ENCODE measurements at regions of chr6 and their contacts with region 1.

Region 1: DNA sequence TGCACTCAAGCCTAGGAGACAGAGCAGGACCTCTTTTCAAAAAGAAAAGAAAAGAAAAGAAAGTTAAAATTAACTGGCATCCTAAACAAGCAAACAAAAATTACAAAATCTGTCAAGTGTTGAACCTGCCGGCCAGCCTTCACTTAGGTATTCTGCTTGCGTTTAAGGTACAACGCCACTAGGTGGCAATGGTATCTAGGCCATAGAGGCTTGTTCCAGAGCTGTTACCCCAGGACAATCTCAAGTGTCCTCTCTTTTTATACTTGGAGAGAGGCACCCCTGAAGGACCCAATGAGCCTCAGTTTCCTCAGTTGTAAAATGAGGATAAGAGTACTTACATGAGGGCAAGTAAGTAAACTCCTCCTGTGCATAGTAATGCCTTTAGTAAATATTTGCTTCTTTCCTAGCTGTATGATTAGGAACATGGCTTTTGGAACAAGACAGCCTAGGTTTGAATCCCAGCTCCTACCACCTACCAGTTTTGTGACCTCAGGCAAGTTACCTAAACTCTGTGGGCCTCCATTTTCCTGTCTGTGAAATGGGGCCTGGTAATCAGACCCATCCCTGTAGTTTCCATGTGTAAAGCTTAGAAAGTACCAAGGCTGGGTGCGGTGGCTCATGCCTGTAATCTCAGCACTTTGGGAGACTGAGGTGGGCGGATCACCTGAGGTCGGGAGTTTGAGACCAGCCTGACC is 5.8 kb upstream of the PACSIN1 start:
- DNase-seq: peak in 1 of 2 experiments; percentile 55
- H3K4me3 ChIP-seq: no peak overlapping the region
- H3K4me3 Mint-ChIP-seq: no peak overlapping the region
- H3K27ac Mint-ChIP-seq: no peak overlapping the region
- H3K4me1 ChIP-seq: peaks cover 5% of the 10 kb centered on the region
- H3K4me1 Mint-ChIP-seq: peaks cover 12% of the 10 kb centered on the region
- H3K27me3 ChIP-seq: no peaks in the 10 kb centered on the region
- H3K27me3 Mint-ChIP-seq: no peaks in the 10 kb centered on the region
- CTCF ChIP-seq: peak; percentile 64 to 72

Region 2: DNA sequence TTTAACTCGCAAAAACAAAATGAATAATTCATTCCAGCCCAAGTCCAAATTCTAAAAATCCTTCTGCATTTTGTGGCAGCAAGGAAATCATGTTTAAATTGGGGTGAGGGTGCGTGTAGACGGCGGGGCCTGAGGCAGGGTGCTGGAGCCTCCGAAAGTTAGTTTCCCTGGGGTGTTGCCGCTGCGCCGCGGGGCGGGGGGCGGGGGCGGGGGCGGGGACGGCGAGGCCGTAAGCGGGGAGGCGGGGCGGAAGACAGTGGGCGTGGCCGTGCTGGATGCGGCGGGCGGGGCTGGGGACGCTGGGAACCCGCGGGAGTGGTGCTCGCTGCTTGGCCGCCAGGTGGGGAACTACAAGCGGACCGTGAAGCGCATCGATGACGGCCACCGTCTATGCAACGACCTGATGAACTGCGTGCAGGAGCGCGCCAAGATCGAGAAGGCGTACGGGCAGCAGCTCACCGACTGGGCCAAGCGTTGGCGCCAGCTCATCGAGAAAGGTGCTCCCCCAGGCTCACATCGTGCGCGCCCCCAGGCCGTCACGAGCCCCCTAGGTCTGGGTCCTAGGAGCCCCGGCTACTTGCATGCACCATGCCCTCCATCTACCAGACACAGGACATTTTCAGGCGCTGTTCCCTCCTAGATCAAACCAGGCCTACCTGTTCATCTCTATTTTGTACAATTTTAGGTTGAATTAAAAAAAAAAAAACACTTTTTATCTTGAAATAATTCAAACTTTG is 67.1 kb after region 1 on chr6:
- CTCF ChIA-PET with region 1: interaction called, 3 read pairs
- POLR2A ChIA-PET with region 1: no interaction called
- intact Hi-C with region 1: loop called (anchors 10 kb)
- DNase-seq: peak; percentile 93 to 95
- H3K4me3 ChIP-seq: peak overlapping the region; percentile 37
- H3K4me3 Mint-ChIP-seq: peak overlapping the region; percentile 57
- H3K27ac Mint-ChIP-seq: no peak overlapping the region
- H3K4me1 ChIP-seq: peaks cover 12% of the 10 kb centered on the region; the same call in 1 of the 2 replicates
- H3K4me1 Mint-ChIP-seq: no peaks in the 10 kb centered on the region
- H3K27me3 ChIP-seq: no peaks in the 10 kb centered on the region
- H3K27me3 Mint-ChIP-seq: no peaks in the 10 kb centered on the region
- CTCF ChIP-seq: peak; percentile 68 to 71

Region 3: DNA sequence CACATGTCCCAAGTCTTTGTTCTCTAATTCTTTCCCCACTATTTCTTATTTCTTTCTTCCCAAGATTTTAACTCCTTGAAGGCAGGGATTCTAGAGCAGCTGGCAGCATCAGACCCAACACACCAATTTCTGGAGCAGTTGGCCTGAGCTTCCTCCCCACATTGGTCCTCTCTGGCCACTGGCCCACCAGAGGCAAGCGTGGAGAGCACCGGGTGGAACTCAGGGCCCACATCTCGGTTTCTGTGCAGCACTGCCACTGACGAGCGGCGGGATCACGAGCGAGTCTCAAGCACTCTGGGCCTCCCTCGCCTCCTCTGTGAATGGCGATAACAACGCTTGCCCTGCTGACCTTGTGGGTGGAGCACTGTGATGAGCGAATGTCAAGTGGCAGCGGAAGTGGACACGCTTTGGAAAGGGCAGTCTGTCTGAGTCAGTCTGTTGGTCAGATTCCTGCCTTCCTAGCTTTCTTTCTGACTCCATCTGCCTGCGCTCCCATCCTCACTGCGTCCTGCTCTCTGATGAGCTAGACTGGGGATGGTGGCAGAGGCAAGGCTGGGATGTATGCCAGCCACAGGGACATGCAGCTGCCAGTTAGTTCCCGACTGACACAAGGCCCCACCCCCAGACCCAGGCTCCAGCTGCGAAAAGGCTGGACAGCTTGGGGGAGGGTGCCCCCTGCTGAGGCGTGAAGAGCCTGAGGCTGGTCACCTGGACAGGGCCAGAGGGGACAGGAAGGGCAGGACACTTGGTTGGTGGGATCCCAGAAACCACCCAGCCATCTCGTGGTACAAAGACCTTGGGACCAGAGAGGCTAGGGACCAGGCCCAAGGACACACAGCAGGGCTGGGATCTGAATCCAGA is 100.5 kb after region 1 on chr6:
- CTCF ChIA-PET with region 1: interaction called, 3 read pairs
- POLR2A ChIA-PET with region 1: no interaction called
- intact Hi-C with region 1: loop called (anchors 5 kb)
- DNase-seq: peak in 1 of 2 experiments; percentile 29
- H3K4me3 ChIP-seq: no peak overlapping the region
- H3K4me3 Mint-ChIP-seq: no peak overlapping the region
- H3K27ac Mint-ChIP-seq: peak overlapping the region; percentile 12
- H3K4me1 ChIP-seq: peaks cover 10% of the 10 kb centered on the region
- H3K4me1 Mint-ChIP-seq: peaks cover 17% of the 10 kb centered on the region
- H3K27me3 ChIP-seq: no peaks in the 10 kb centered on the region
- H3K27me3 Mint-ChIP-seq: no peaks in the 10 kb centered on the region
- CTCF ChIP-seq: peak in 1 of 2 experiments; percentile 27

Region 4: DNA sequence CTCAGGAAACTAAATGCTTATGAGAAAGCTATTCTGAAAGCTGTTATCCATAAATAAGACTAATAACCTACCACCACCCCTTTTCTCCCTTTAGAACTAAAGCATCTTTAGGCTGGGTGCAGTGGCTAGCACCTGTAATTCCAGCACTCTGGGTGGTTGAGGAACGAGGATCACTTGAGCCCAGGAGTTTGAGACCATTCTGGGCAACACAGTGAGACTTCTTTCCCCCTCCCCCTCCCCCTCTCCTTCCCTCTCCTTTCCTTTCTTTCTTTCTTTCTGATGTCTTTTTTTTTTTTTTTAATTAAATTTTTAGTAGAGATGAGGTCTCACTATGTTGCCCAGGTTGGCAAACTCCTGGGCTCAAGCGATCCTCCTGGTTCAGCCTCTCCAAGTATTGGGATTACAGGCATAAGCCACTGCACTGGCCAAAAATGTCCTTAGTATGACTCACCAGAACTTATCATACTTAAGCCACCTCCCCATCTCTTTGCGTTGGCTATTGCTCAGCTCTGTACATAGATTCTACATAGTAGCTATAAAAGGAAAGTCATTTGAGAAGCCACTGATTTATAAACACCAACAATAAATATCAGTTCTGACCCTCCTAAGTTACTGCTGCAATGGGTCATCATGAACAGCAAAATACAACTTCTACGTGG is 150.9 kb after region 1 on chr6:
- CTCF ChIA-PET with region 1: interaction called, 24 read pairs
- POLR2A ChIA-PET with region 1: no interaction called
- intact Hi-C with region 1: loop called (anchors 1 kb)
- DNase-seq: no peak
- H3K4me3 ChIP-seq: no peak overlapping the region
- H3K4me3 Mint-ChIP-seq: no peak overlapping the region
- H3K27ac Mint-ChIP-seq: peak overlapping the region; percentile 89
- H3K4me1 ChIP-seq: peaks cover 35% of the 10 kb centered on the region
- H3K4me1 Mint-ChIP-seq: peaks cover 9% of the 10 kb centered on the region
- H3K27me3 ChIP-seq: no peaks in the 10 kb centered on the region
- H3K27me3 Mint-ChIP-seq: no peaks in the 10 kb centered on the region
- CTCF ChIP-seq: no peak

Measured in Caco-2 (cell line).